ENCODE measurements at regions of chr7 and their contacts with region 1.

Region 1: GRCh38 chr7:101321491-101322401 is at the start of gene IFT22:
- DNase-seq: peak; percentile 93
- ATAC-seq: peak; percentile 97
- H3K4me3 Mint-ChIP-seq: peak within 1 kb of the TSS; percentile 82
- H3K27ac Mint-ChIP-seq: peak within 1 kb of the TSS; percentile 89
- H3K4me1 Mint-ChIP-seq: peaks cover 8% of the 10 kb centered on the region
- H3K27me3 Mint-ChIP-seq: no peaks in the 10 kb centered on the region
- total RNA-seq, gene IFT22: 6.0 to 6.7 TPM

Region 2: GRCh38 chr7:101244375-101245146 is 77.2 kb before region 1 on chr7 and contains the start of gene FIS1:
- CTCF ChIA-PET with region 1: interaction called, 3 read pairs
- POLR2A ChIA-PET with region 1: no interaction called
- intact Hi-C with region 1: loop called in 1 of 2 experiments (anchors 2 kb)
- DNase-seq: peak; percentile 97
- ATAC-seq: peak; percentile 96
- H3K4me3 Mint-ChIP-seq: peak within 1 kb of the TSS; percentile 97
- H3K27ac Mint-ChIP-seq: peak within 1 kb of the TSS; percentile 97
- H3K4me1 Mint-ChIP-seq: peaks cover 25% of the 10 kb centered on the region
- H3K27me3 Mint-ChIP-seq: no peaks in the 10 kb centered on the region
- total RNA-seq, gene FIS1: 70.5 to 92.6 TPM

Region 3: DNA sequence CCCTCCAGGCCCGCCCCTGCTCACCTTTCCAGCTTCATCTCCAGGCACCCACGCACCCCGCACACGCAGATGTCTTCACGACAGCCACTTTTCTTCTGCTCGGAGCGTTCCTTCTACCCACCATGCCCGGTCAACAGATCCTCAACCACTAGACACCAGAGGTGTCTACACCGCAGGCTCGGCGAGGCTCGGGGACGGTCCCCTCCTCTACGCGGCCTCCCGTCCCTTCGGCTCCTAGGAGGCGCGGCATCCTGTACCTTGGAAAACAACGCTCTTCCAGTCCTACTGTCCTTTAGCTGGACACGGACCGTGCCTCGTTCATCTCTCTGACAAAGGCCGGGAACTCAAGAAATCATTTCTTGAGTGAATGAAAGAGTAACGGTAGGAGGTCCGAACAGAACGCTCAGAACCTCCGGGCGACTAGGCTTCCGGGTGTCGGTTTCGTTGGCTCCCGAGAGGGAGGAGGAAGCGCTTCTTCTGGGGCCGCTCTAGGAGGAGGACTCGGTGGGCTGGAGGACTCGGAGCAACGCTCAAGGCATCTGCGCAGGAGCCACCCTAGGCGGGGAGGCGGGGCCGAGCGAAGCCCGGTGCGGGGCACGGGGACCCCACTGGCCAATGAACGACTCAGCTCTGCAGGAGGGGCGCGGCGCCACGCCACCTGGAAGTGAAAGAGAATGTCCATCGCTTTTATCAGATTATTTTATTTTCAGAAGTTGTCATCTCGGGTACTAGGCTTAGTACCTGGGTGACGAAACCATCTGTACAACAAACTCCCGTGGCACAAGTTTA is 69.7 kb before region 1 on chr7:
- CTCF ChIA-PET with region 1: no interaction called
- POLR2A ChIA-PET with region 1: no interaction called
- intact Hi-C with region 1: loop called in 1 of 2 experiments (anchors 1 kb)
- DNase-seq: peak; percentile 99
- ATAC-seq: peak; percentile 100
- H3K4me3 Mint-ChIP-seq: peak overlapping the region; percentile 96
- H3K27ac Mint-ChIP-seq: peak overlapping the region; percentile 96
- H3K4me1 Mint-ChIP-seq: peaks cover 26% of the 10 kb centered on the region
- H3K27me3 Mint-ChIP-seq: peaks cover 5% of the 10 kb centered on the region

Region 4: GRCh38 chr7:101308245-101309085 is 13.3 kb before region 1 on chr7:
- CTCF ChIA-PET with region 1: interaction called, 3 read pairs
- POLR2A ChIA-PET with region 1: no interaction called
- intact Hi-C with region 1: loop called in 1 of 2 experiments (anchors 1 kb)
- DNase-seq: peak; percentile 71
- ATAC-seq: peak; percentile 93
- H3K4me3 Mint-ChIP-seq: peak overlapping the region; percentile 93
- H3K27ac Mint-ChIP-seq: peak overlapping the region; percentile 91
- H3K4me1 Mint-ChIP-seq: peaks cover 9% of the 10 kb centered on the region
- H3K27me3 Mint-ChIP-seq: peaks cover 27% of the 10 kb centered on the region